Vagina (tissue), 2 donors: ENCODE measurements at regions of chr9 and their contacts with region 1.

Region 1: GRCh38 chr9:96654443-96655197 is 497 bp downstream of the PRXL2C start:
- DNase-seq: peak in 1 of 2 donors; percentile 90
- H3K4me3 ChIP-seq: peak overlapping the region; percentile 57 to 84
- H3K27ac ChIP-seq: peak overlapping the region; percentile 93
- H3K4me1 ChIP-seq: peaks cover 25% of the 10 kb centered on the region
- H3K27me3 ChIP-seq: no peaks in the 10 kb centered on the region
- CTCF ChIP-seq: no peak
- POLR2A ChIP-seq: peak in 1 of 2 donors; percentile 20

Region 2: DNA sequence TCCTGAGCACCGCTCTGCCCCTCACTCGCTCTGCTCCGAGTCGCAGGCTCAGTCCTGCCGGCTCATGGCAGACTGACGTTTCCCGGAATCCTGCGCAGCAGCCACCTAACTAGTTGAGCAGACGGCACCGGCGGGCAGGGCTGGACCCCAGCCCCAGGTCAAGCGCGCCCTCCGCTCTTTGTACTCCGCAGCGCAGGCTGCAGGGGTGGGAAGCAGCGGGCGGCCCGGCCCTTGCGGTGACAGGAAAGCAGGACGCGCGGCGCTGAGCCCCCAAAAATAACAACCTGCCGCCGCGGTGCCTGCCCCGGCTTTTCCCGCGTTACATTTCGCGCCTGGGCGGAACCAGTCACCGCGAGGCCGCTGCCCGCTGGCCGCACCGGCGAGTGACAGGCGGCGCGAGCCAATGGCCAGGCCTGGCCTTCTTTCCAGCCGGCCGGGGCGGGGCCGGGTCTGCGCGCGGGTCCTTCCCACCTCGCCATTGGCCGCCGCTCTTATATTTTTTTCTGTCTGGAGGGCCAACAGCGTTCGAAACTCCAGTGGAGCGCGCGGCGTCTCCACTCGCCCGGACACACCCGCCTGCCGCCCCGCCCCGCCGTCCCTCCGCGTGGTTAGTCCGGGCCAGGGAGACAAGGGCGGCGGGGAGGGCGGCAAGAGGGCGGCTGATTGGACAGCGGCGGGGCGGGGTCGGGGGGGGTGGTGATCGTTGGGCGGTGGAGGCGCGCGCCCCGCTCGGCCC is 236.4 kb before region 1 on chr9 and contains the start of gene ZNF367:
- intact Hi-C with region 1: loop called (anchors 10 kb)
- DNase-seq: peak in 1 of 2 donors; percentile 99
- H3K4me3 ChIP-seq: peak within 1 kb of the TSS; percentile 93 to 96
- H3K27ac ChIP-seq: peak within 1 kb of the TSS; percentile 99
- H3K4me1 ChIP-seq: peaks cover 33% of the 10 kb centered on the region
- H3K27me3 ChIP-seq: no peaks in the 10 kb centered on the region
- CTCF ChIP-seq: peak in 1 of 3 experiments; percentile 6
- POLR2A ChIP-seq: peak in 1 of 2 donors; percentile 2
- total RNA-seq, gene ZNF367: 0.74 TPM

Region 3: GRCh38 chr9:96619491-96620154 is 35.0 kb before region 1 on chr9 and contains the start of gene CDC14B:
- intact Hi-C with region 1: loop called (anchors 2 kb)
- DNase-seq: peak in 1 of 2 donors; percentile 91
- H3K4me3 ChIP-seq: peak within 1 kb of the TSS; percentile 75 to 83
- H3K27ac ChIP-seq: peak within 1 kb of the TSS; percentile 75
- H3K4me1 ChIP-seq: peaks cover 17% of the 10 kb centered on the region
- H3K27me3 ChIP-seq: no peaks in the 10 kb centered on the region
- CTCF ChIP-seq: no peak
- POLR2A ChIP-seq: no peak
- total RNA-seq, gene CDC14B: 15.7 TPM